Mammary epithelial cell (primary cell): ENCODE measurements at regions of chr1 and their contacts with region 1.

Region 1: GRCh38 chr1:24070821-24071393 is 41.0 kb downstream of the MYOM3 start:
- DNase-seq: peak; percentile 75
- H3K4me3 ChIP-seq: no peak overlapping the region
- H3K27ac ChIP-seq: no peak overlapping the region
- H3K4me1 ChIP-seq: no peaks in the 10 kb centered on the region
- H3K27me3 ChIP-seq: no peaks in the 10 kb centered on the region
- CTCF ChIP-seq: peak; percentile 70 to 97

Region 2: DNA sequence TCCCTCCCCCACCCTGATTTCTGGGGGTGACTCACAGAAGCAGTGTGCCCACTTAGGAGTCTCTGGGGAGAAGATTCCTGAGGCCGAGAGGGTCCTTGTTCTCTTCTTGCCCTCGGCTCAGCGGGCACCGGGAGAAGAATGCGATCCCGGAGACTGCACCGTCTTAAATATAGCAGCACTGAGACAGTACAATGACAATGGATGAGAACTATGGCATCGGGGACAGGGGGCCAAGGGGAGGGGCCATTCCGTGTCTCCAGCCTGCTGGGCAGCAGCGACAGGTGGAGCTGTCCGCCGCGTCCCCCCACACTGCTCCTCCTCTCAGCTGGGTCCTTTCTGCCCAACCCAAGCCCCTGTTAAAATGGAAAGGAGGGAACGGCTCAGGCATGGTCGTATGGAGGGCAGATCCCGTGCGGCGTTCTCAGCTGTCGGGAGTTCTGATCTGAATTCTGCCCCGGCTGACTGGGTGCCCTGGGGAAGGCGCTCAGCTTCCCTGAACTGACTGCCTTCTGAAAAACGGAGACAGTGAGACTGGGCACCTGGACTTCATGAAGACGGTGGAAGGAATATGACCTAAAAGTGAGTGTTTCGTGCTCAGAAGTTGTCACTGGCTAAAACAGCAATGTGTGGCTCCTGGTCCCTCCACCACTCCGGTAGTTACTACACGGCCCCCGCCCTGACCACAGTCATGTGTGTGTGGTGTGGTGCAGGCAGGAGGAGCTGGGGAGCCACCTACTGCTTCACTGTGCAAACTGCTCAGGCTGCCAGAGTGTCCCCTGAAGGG is 41.3 kb after region 1 on chr1 and contains the start of gene MYOM3:
- CTCF ChIA-PET with region 1: interaction called, 4 read pairs
- dilution Hi-C with region 1: loop called (anchors 5 kb)
- in situ Hi-C with region 1: no loop called
- intact Hi-C with region 1: loop called (anchors 1 kb)
- DNase-seq: peak; percentile 77
- H3K4me3 ChIP-seq: peak within 1 kb of the TSS in 1 of 3 experiments; percentile 33
- H3K27ac ChIP-seq: peak within 1 kb of the TSS; percentile 55
- H3K4me1 ChIP-seq: peaks cover 36% of the 10 kb centered on the region
- H3K27me3 ChIP-seq: no peaks in the 10 kb centered on the region
- CTCF ChIP-seq: peak; percentile 61 to 83
- total RNA-seq, gene MYOM3: 0.54 to 1.8 TPM

Region 3: DNA sequence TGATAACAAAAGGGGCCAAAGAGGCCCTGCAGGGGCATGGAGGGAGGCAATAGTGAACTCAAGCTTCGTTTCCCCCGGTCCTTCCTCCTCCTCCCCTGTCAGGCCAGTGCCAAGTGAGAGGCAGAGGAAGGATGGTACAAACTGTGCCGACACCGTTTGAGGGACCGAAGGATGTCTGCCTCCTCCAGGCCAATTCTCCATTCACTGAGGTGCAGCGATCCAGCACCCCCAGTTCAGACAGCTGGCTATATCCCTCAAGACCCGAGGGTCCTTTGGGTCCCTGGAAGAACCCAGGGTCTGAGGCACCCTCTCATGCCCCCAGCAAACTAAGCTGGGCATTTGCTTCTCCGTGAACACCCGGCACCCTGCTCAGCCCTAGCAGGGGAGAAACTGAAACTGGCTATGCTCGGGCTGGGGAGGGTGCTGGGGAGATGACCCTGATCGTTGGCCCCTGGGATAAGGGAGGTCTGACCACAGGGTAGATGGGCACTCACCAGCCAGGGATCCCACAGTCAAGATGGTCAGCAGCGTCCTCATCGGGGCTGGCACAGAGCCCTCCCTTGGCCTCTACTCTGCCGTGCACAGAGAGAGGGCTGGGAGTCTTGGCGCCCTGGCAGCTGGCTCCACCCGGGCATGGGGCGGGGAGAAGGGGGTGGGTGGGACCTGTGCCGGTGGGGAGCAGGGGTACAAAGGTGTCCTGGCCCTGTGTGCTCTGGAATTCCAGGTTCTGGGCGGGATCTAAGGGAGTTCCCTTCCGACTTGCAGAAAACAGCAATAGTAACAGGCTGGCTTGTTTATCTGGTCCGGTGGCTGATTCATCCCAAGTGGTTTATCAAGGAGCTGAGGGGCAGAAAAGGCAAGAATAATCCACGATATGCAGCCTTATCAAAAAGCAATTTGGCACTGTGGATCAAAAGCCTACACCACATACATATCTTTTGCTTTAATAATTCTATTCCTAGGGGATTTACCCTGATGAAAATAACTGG is 71.9 kb after region 1 on chr1 and contains the start of gene IL22RA1:
- CTCF ChIA-PET with region 1: no interaction called
- dilution Hi-C with region 1: no loop called
- in situ Hi-C with region 1: no loop called
- intact Hi-C with region 1: loop called (anchors 2 kb)
- DNase-seq: peak; percentile 76
- H3K4me3 ChIP-seq: peak within 1 kb of the TSS; percentile 45 to 69 (median 54)
- H3K27ac ChIP-seq: peak within 1 kb of the TSS; percentile 41
- H3K4me1 ChIP-seq: peaks cover 15% of the 10 kb centered on the region
- H3K27me3 ChIP-seq: no peaks in the 10 kb centered on the region
- CTCF ChIP-seq: peak in 1 of 2 donors; percentile 9
- total RNA-seq, gene IL22RA1: 0.50 to 3.3 TPM

Region 4: DNA sequence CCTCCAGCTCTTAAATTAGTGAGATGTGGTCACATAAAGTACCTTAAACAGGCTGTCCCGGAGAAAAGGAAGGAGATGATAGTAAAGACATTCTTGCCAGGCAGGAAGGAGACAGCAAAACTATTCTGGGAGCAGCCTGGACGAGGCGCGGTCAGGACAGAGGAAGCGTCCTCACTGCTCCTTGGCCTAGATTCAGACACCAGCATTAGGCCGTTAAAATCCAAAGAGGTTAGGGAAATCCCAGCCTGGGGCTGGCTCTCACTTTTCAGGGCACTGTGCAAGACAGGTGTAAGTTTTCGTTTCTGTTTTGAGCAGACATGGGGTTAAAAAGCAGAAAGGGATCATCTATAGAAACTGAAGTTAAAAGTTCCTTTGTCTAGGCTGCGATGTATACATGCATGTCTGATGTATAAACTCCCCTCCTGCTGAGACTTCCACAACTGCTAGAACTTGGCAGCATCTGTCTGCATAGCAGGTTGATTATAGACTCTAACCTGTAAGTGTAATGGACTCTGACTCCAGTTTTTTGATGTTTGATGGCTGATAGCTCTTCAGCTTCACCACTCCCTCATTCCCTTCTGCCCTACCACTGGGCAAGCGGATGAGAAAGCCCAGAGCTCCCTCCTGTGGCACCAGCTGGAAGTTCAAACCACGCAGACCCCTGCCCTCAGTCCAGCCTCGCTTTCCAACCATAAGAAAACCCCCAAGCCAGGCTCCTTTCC is 321.1 kb after region 1 on chr1:
- CTCF ChIA-PET with region 1: no interaction called
- dilution Hi-C with region 1: no loop called
- in situ Hi-C with region 1: loop called in 1 of 2 experiments (anchors 5 kb)
- intact Hi-C with region 1: loop called (anchors 1 kb)
- DNase-seq: peak; percentile 50
- H3K4me3 ChIP-seq: peak overlapping the region in 2 of 3 experiments; percentile 14 to 24
- H3K27ac ChIP-seq: peak overlapping the region; percentile 76
- H3K4me1 ChIP-seq: peaks cover 28% of the 10 kb centered on the region
- H3K27me3 ChIP-seq: no peaks in the 10 kb centered on the region
- CTCF ChIP-seq: peak; percentile 87 to 90